A673 (cell line): ENCODE measurements at regions of chr15 and their contacts with region 1.

Region 1: GRCh38 chr15:76730262-76730661 is 174.9 kb downstream of the SCAPER start:
- DNase-seq: no peak
- H3K4me3 ChIP-seq: no peak overlapping the region
- H3K27ac ChIP-seq: no peak overlapping the region
- H3K4me1 ChIP-seq: no peaks in the 10 kb centered on the region
- H3K27me3 ChIP-seq: no peaks in the 10 kb centered on the region
- CTCF ChIP-seq: no peak

Region 2: GRCh38 chr15:76517910-76518309 is 212.4 kb before region 1 on chr15:
- CTCF ChIA-PET with region 1: interaction called, 10 read pairs
- POLR2A ChIA-PET with region 1: no interaction called
- intact Hi-C with region 1: no loop called
- DNase-seq: peak; percentile 80
- H3K4me3 ChIP-seq: no peak overlapping the region
- H3K27ac ChIP-seq: peak overlapping the region; percentile 38
- H3K4me1 ChIP-seq: peaks cover 28% of the 10 kb centered on the region
- H3K27me3 ChIP-seq: no peaks in the 10 kb centered on the region
- CTCF ChIP-seq: no peak

Region 3: GRCh38 chr15:76714950-76715349 is 15.3 kb before region 1 on chr15:
- CTCF ChIA-PET with region 1: no interaction called
- POLR2A ChIA-PET with region 1: no interaction called
- intact Hi-C with region 1: no loop called
- DNase-seq: no peak
- H3K4me3 ChIP-seq: no peak overlapping the region
- H3K27ac ChIP-seq: no peak overlapping the region
- H3K4me1 ChIP-seq: no peaks in the 10 kb centered on the region
- H3K27me3 ChIP-seq: no peaks in the 10 kb centered on the region
- CTCF ChIP-seq: no peak